Activated B cell treated with CpG ODN at 0.5 μM for 24 hours (primary cell): ENCODE measurements at regions of chr1 and their contacts with region 1.

Region 1: DNA sequence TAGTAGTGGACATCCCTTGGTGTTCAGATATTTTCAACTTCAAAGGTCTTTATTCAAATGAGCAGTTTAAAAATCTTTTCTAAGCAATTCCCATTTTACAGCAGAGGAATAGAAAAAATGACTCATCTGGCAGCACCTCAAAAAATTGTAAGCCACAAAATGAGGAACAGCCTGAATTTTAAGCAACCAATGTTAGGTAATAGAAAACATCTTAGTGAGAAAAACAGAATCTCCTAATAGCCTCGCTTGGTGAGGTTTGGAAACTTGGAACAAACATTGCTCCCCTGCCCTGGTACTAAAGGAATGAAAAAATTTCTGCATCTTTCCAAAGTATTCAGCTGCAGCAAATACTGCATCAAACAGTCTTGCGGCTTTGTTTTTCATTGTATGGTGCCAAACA is 264.4 kb downstream of the NTNG1 start:
- DNase-seq: no peak
- ATAC-seq: no peak
- H3K4me3 Mint-ChIP-seq: no peak overlapping the region
- H3K27ac Mint-ChIP-seq: no peak overlapping the region
- H3K4me1 Mint-ChIP-seq: peaks cover 11% of the 10 kb centered on the region
- H3K27me3 Mint-ChIP-seq: no peaks in the 10 kb centered on the region
- CTCF ChIP-seq: no peak

Region 2: DNA sequence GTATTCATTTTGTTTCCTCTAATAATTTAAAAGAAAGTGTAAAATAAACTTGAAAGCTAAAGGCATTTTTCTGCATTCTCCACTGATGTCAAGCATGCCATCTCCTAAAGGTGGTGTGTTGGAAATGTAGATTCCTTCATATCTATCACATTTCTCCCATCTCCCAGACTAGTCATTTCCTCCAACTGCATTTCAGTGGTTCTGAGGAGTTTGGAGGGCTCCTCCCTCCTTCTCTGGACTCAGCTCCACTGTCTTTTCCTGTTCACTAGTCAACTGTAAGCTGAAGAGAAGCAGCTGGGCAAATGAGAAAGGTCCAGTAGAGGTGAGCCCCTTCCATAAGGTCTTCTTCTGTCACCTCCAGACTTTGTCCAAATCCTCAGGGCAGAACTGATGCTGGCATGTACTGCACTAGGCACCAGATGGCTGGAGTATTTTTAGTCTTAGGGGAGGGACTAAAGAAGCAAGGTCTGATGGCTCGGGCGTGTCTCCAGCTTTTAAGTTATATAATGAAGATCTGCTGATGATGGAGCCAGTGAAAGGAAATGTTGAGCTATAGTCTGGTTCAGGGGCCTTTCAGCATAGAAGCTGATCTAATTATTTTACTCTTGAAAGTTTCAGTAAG is 78.3 kb before region 1 on chr1:
- CTCF ChIA-PET with region 1: no interaction called
- POLR2A ChIA-PET with region 1: no interaction called
- intact Hi-C with region 1: loop called (anchors 5 kb)
- DNase-seq: no peak
- ATAC-seq: no peak
- H3K4me3 Mint-ChIP-seq: no peak overlapping the region
- H3K27ac Mint-ChIP-seq: peak overlapping the region; percentile 27
- H3K4me1 Mint-ChIP-seq: peaks cover 16% of the 10 kb centered on the region
- H3K27me3 Mint-ChIP-seq: peaks cover 2% of the 10 kb centered on the region
- CTCF ChIP-seq: no peak

Region 3: DNA sequence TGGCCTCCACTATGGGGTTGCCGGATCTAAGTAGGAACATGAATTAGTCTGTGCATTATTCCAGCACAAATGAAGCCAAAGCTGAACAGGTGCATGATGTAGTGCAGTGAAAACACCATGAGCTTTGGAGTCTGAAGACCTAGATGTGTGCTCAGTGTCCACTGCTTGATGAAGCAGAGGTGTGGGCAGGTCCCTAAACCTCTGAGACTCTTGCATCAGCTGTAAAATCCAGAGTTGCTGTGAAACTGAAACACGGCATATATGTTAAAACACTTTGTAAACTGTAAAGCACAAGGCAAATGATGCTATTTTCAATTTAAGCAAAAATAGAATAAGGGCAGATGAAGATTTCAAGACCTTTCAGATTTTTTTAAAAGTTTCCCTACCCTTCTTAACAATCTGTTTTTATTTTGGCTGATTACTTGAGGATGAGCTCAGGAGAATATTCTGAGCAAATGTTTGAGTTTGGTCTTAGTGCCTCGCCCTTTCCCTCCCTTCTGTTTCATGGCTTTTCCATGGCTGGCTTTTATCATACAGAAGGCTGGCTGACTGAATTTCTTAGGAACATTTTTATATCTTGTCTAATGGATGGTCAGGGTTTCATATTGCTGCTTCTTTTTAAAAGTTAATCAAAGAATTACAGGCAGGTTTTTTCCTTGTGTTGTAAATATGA is 42.6 kb before region 1 on chr1:
- CTCF ChIA-PET with region 1: no interaction called
- POLR2A ChIA-PET with region 1: no interaction called
- intact Hi-C with region 1: no loop called
- DNase-seq: no peak
- ATAC-seq: no peak
- H3K4me3 Mint-ChIP-seq: no peak overlapping the region
- H3K27ac Mint-ChIP-seq: peak overlapping the region; percentile 69
- H3K4me1 Mint-ChIP-seq: peaks cover 47% of the 10 kb centered on the region
- H3K27me3 Mint-ChIP-seq: no peaks in the 10 kb centered on the region
- CTCF ChIP-seq: no peak

Region 4: DNA sequence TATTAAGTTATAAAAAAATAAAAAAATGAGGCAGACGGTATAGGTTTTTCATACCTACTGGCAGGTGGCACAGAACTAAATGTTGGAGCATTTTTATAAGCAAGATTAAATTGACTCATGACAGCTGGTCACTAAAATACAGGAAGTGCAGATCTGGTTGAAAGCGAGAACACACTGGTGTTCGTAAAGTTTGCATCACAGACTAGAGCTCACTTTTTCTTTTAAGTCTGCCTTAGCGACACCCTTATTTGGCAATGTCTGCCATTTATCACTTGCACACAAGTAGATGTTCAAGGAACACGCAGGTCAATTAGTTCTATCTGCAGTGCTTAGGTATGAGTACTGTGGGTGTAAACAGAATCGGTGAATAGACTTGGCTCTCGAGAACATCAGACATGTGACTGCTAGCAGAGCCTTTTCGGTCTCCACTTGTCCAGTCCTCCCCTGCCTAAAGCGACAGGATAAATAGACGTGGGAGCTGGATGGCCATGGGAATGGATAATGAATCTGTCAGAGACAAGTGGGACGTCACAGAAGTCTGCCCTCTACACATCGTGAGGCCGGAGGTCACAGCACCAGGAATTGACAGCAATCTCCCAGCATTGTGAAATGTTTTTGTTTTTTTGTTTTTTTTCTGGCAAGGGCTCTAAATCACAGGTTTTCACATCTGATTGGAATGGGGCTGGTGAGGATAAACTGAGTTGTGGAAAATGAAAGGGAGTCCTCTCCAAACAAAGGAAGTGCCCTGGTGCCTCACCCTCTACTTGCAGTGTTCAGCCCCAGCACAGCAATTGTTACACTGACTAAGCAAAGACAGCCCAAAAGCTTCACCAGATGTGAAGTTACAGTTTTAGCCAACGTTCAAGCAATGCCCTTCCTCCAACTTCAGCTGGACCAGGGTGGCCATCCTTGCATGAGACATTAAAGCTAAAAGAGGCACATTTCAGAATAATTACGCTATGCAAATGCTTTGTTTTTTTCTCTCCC is 15.5 kb before region 1 on chr1:
- CTCF ChIA-PET with region 1: no interaction called
- POLR2A ChIA-PET with region 1: no interaction called
- intact Hi-C with region 1: no loop called
- DNase-seq: no peak
- ATAC-seq: peak; percentile 31
- H3K4me3 Mint-ChIP-seq: peak overlapping the region; percentile 16
- H3K27ac Mint-ChIP-seq: peak overlapping the region; percentile 59
- H3K4me1 Mint-ChIP-seq: no peaks in the 10 kb centered on the region
- H3K27me3 Mint-ChIP-seq: no peaks in the 10 kb centered on the region
- CTCF ChIP-seq: no peak